ENCODE measurements at regions of chr7 and their contacts with region 1.

Region 1: GRCh38 chr7:47610506-47611044 is 28.7 kb upstream of the TNS3 start:
- DNase-seq: peak; percentile 86
- H3K4me3 ChIP-seq: no peak overlapping the region; the same call in 1 of the 2 replicates
- H3K27ac ChIP-seq: peak overlapping the region; percentile 94
- H3K27me3 ChIP-seq: no peaks in the 10 kb centered on the region
- CTCF ChIP-seq: no peak

Region 2: GRCh38 chr7:47435889-47436312 is 174.7 kb before region 1 on chr7:
- CTCF ChIA-PET with region 1: interaction called, 13 read pairs
- POLR2A ChIA-PET with region 1: no interaction called
- DNase-seq: peak; percentile 47
- H3K4me3 ChIP-seq: no peak overlapping the region
- H3K27ac ChIP-seq: no peak overlapping the region
- H3K27me3 ChIP-seq: no peaks in the 10 kb centered on the region
- CTCF ChIP-seq: peak; percentile 66

Region 3: GRCh38 chr7:47591655-47592572 is 18.7 kb before region 1 on chr7:
- CTCF ChIA-PET with region 1: no interaction called
- POLR2A ChIA-PET with region 1: interaction called, 15 read pairs
- DNase-seq: peak; percentile 68
- H3K4me3 ChIP-seq: no peak overlapping the region
- H3K27ac ChIP-seq: peak overlapping the region; percentile 92
- H3K27me3 ChIP-seq: no peaks in the 10 kb centered on the region
- CTCF ChIP-seq: no peak

Region 4: GRCh38 chr7:47622946-47623640 is 12.5 kb after region 1 on chr7:
- CTCF ChIA-PET with region 1: interaction called, 8 read pairs
- POLR2A ChIA-PET with region 1: interaction called, 32 read pairs
- DNase-seq: peak; percentile 91
- H3K4me3 ChIP-seq: no peak overlapping the region
- H3K27ac ChIP-seq: peak overlapping the region; percentile 69
- H3K27me3 ChIP-seq: no peaks in the 10 kb centered on the region
- CTCF ChIP-seq: no peak

Region 5: GRCh38 chr7:47786557-47787248 is 176.1 kb after region 1 on chr7:
- CTCF ChIA-PET with region 1: no interaction called
- POLR2A ChIA-PET with region 1: interaction called, 15 read pairs
- DNase-seq: peak; percentile 96
- H3K4me3 ChIP-seq: no peak overlapping the region
- H3K27ac ChIP-seq: peak overlapping the region; percentile 97
- H3K27me3 ChIP-seq: no peaks in the 10 kb centered on the region
- CTCF ChIP-seq: no peak